Activated CD4-positive, alpha-beta T cell treated with anti-CD3 and anti-CD28 coated beads for 36 hours (primary cell): ENCODE measurements at regions of chr5 and their contacts with region 1.

Region 1: GRCh38 chr5:95781101-95781583 is 41.4 kb downstream of the GLRX start:
- DNase-seq: peak; percentile 84
- ATAC-seq: peak; percentile 99
- H3K4me3 Mint-ChIP-seq: no peak overlapping the region
- H3K27ac Mint-ChIP-seq: peak overlapping the region; percentile 12
- H3K4me1 Mint-ChIP-seq: peaks cover 5% of the 10 kb centered on the region
- H3K27me3 Mint-ChIP-seq: no peaks in the 10 kb centered on the region

Region 2: DNA sequence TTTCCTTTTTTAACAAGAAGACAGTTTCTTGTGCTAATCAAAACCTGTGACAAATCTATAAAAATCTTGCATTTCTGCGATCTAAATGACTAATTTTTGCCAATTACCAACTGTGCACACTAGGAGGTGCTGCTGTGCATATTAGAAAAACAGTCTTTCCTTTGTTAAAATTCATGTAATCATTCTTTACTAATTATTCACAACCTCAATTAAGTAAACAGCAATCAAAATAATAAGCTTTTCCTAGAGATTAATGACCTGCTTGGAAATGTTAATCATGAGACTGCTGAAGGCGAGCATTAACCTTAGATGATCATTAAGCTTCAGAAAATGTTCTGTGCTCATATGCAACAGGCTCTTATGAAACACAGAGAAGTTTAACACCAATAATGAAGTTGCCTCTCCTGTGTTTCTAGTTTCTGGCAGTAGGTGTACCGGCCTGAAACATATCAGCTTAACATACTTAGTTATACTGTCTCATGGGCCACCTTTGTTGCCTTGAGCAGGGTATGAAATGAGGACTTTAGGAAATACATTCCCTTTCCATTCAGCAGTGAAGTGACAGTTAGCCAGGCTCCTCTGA is 116.8 kb before region 1 on chr5:
- CTCF ChIA-PET with region 1: interaction called, 35 read pairs
- POLR2A ChIA-PET with region 1: no interaction called
- intact Hi-C with region 1: loop called (anchors 1 kb)
- DNase-seq: peak; percentile 54
- ATAC-seq: no peak
- H3K4me3 Mint-ChIP-seq: no peak overlapping the region
- H3K27ac Mint-ChIP-seq: no peak overlapping the region
- H3K4me1 Mint-ChIP-seq: no peaks in the 10 kb centered on the region
- H3K27me3 Mint-ChIP-seq: no peaks in the 10 kb centered on the region

Region 3: DNA sequence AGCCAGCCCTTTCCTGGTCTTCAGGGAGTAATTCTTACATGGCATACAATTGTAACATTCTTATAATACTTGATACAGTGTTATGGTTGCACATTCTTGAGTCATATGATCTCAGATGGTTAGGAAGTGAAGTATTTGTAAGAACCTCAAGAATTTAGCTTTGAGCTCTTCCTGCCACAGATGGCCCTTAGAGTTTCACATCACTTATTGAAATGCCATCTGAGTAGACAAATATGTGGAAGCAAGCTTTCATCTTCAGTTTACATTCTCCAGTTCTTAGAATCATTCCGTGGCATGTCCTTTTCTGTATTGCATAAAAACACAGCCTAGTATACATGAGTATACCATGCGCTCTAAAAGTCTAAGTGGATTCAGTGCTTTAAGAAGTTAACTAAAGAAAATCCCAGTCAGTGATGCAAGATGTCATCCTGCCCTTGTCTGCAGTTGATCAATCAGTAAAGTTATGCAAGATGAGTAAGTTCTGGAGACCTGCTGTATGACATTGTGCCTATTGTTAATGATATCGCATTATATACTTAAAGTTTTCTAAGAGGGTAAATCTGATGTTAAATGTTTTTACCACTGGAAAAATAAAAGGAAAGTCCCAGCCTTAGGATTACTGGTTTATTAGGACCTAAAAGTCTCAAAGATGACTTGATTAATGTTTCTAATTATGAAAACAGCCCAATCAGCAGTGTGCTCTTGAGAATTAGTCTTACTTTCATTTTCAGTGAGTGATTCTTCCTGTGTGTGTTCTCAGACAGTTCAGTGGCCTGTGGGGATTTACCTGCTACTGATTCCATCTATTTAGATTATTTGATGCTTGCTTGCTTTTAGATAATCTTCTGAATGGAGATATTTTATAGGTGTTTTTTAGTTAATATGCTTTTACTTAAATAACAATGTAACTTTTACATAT is 20.6 kb before region 1 on chr5:
- CTCF ChIA-PET with region 1: interaction called, 11 read pairs
- POLR2A ChIA-PET with region 1: no interaction called
- intact Hi-C with region 1: no loop called
- DNase-seq: peak; percentile 29
- ATAC-seq: peak; percentile 91
- H3K4me3 Mint-ChIP-seq: peak overlapping the region; percentile 52
- H3K27ac Mint-ChIP-seq: peak overlapping the region; percentile 69
- H3K4me1 Mint-ChIP-seq: peaks cover 27% of the 10 kb centered on the region
- H3K27me3 Mint-ChIP-seq: no peaks in the 10 kb centered on the region

Region 4: DNA sequence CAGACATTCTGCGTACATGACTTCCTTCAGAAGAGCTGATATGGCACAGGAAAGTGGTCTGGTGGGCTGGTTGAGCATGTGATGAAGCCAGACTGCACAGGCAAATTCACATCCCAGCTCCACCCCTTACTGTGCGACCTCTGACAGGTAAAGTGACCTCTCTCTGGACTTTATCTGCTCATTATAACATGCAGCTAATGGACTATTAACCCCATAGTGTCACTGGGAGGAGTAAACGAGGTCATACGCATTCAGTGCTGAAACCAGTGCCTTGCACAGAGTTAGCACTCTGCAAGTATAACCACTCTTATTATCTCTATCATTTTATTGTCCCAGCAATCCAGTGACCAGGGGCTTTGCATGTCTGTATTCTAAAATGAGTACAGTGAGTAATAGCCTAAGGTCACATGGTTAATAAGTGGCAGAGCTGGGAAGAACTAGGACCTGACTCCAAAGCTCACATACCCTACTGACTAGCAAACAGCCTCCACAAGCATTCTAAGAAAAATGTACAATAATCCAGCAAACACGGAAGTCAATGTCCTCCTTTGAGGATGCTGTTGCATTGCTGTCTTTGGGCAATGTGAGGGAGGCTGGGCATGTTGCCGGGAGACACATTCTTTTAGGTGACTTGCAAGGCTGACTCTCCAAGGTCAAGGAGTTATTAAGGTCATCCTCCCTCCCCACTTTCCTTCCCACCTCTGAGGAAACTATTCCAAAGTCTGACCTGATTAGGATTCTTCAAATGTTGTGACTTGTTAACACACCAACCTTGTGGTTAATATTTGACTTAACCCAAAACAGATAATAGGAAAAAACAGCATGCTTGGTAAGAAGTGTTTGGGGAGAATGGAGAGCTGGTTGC is 22.4 kb after region 1 on chr5:
- CTCF ChIA-PET with region 1: interaction called, 41 read pairs
- POLR2A ChIA-PET with region 1: interaction called, 3 read pairs
- intact Hi-C with region 1: no loop called
- DNase-seq: no peak
- ATAC-seq: no peak
- H3K4me3 Mint-ChIP-seq: no peak overlapping the region
- H3K27ac Mint-ChIP-seq: no peak overlapping the region
- H3K4me1 Mint-ChIP-seq: peaks cover 9% of the 10 kb centered on the region
- H3K27me3 Mint-ChIP-seq: no peaks in the 10 kb centered on the region

Region 5: GRCh38 chr5:95822542-95823181 is 41.5 kb after region 1 on chr5 and contains the start of gene GLRX:
- CTCF ChIA-PET with region 1: interaction called, 89 read pairs
- POLR2A ChIA-PET with region 1: no interaction called
- intact Hi-C with region 1: no loop called
- DNase-seq: peak; percentile 68
- ATAC-seq: peak; percentile 18
- H3K4me3 Mint-ChIP-seq: peak within 1 kb of the TSS; percentile 92
- H3K27ac Mint-ChIP-seq: peak within 1 kb of the TSS; percentile 92
- H3K4me1 Mint-ChIP-seq: peaks cover 62% of the 10 kb centered on the region
- H3K27me3 Mint-ChIP-seq: no peaks in the 10 kb centered on the region
- total RNA-seq, gene GLRX: 21.0 to 31.5 TPM

Region 6: DNA sequence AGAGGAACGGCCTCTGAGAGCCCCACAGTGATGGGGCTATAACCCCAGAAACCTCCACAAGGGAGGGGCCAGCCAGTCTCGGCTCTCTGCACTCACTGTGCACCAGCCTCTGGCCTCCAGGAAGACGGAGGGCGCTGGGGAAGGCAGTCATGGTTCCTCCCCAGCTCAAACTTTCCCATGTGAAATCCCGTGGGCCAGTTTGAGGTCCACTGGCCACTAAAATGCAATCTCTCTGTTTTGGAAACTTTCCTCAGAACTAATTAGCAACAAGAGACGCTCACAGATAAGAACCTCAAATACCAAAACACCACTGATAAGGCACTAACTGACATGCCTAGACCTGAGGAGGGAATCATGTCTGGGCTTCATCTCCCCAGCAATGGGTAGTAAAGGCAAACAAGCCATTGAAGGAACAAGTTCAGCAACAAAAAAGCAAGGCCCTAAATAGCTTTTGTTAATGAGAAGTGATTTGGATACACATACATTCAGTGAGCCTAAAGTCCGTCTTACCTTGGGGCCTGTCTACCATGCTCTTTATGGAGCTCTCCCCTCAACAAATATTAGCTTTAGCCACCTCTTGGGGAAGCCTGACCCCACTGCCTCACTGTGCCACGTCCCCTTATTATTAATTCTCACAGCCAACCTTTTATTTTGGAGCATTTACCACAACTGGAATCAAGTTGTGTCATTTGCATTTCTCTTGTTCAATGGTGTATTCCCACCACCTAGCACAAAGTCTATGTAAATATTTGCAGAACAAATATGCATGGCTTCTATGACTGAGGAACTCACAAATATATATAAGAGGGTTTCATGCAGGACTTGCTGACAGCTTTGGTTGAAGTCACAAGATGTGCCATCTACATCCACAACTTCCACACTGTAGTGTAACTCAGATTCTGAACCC is 97.5 kb after region 1 on chr5:
- CTCF ChIA-PET with region 1: no interaction called
- POLR2A ChIA-PET with region 1: no interaction called
- intact Hi-C with region 1: no loop called
- DNase-seq: no peak
- ATAC-seq: no peak
- H3K4me3 Mint-ChIP-seq: no peak overlapping the region
- H3K27ac Mint-ChIP-seq: no peak overlapping the region
- H3K4me1 Mint-ChIP-seq: peaks cover 2% of the 10 kb centered on the region
- H3K27me3 Mint-ChIP-seq: no peaks in the 10 kb centered on the region

Region 7: DNA sequence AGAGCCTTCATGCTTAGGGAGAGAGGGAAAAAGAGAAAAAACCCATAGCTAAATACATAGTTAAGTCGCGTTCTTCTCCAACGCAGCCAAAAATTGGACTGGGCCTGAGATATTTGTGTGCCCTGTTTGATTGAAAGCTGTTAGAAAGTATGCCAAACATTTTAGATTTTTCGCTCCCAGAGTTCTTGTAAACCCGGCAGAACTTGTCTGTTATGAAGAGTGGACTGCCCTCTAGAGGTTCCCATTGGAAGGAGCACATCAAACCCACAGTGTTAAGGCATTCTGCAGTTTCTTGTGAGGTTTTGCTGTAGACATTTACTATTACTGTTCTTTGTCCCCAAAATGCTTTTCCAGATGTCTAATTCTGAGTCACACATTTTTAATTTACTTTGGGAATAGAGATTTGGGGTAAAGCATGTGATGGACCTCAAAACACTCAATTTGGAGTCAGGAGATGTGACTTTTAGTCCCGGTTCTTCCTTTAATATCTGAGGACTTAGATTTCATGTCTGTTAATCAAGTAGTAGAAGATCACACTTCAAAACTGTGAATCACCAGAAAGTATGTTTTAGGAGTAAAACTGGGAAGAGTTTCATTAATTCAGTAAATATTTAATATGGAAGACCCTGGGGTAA is 555.3 kb after region 1 on chr5:
- CTCF ChIA-PET with region 1: interaction called, 8 read pairs
- POLR2A ChIA-PET with region 1: no interaction called
- intact Hi-C with region 1: loop called in 1 of 2 experiments (anchors 2 kb)
- DNase-seq: peak; percentile 74
- ATAC-seq: peak; percentile 82
- H3K4me3 Mint-ChIP-seq: no peak overlapping the region
- H3K27ac Mint-ChIP-seq: no peak overlapping the region
- H3K4me1 Mint-ChIP-seq: peaks cover 9% of the 10 kb centered on the region
- H3K27me3 Mint-ChIP-seq: peaks cover 26% of the 10 kb centered on the region